ENCODE measurements at regions of chr12 and their contacts with region 1.

Region 1: DNA sequence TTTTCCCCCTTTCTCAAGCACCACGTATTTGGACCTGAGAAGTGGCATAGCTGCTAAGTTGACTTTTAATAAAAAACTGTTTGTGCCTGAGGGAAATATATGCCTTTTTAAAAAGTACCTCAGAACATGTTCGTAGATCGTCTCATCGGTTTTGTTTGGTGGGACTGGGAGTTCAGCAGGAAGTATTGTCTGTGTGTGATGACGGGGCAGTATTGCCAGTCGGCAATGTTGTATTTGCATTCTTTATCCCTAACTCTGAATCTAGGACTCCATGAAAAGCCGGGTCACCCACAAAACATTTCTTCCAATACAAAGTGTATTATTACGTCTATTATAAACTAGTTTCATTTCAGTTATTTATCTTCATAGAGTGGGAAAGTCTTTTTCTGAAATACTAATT is 19.7 kb upstream of the FGD4 start:
- DNase-seq: no peak
- H3K4me3 ChIP-seq: no peak overlapping the region
- H3K27ac ChIP-seq: no peak overlapping the region
- H3K4me1 ChIP-seq: no peaks in the 10 kb centered on the region
- H3K27me3 ChIP-seq: no peaks in the 10 kb centered on the region
- CTCF ChIP-seq: no peak

Region 2: DNA sequence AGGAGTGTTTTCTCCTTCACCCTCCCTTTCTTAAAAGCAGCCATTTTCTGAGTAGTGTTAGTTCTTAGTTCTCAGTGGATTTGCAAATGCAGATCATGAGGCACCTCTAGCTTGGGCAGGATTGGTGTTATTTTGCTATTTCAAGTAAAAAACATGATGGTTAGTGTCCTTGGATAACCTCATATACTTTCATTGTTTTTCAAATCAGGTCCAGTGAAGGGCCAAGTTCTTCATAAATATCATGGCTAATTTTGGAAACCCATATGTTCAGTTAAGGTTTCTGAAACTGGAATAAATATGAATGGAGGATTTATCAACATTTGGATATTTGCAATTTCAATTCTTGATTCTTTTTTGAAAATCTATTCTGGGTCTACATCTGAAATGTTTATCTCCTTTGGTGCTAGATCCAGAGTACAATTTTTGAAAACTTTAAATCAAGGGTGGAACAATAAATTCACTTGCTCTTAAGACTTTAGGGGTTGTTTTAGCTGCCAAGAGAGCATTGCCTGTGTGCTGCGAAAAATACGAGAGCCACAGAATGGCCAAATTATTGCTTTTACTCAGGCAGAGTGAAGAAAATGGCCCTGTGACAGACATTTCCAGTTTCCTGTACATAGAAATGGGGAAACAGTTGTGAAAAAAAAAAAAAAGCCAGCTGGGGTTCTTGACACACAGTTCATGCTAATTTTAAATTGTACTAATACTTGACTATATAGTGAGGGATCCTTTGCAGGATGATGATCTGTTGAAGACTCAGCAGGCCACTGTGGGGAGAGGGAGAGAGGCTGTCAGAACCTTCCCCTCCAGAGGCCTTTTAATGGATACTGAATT is 168.4 kb before region 1 on chr12:
- intact Hi-C with region 1: no loop called
- DNase-seq: no peak
- H3K4me3 ChIP-seq: no peak overlapping the region
- H3K27ac ChIP-seq: no peak overlapping the region
- H3K4me1 ChIP-seq: peaks cover 12% of the 10 kb centered on the region
- H3K27me3 ChIP-seq: no peaks in the 10 kb centered on the region
- CTCF ChIP-seq: no peak

Region 3: DNA sequence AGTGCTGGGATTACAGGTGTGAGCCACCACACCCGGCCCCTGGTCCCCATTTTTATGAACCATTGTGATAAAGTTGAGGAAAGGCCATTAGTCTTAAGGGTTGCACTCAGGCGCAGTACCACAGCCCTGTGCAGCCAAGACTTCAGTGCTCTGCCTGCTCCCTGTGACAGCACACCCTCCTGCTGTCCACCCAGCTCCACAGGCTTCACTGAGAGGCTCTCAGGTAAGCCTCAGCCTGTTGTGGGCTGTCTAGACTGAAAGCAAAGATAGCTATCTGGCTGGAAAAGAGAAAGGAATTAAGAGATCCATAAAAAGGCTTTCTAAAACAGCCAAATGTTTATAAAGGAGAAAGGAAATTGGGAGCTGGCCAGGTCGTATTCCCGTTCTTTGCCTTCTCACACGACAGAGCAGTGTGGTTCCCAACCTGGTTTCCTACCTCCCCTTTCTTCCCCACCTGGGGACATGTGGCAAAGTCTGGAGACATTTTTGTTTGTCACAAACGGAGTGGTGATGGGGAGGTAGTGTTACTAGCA is 280.3 kb after region 1 on chr12:
- intact Hi-C with region 1: loop called (anchors 5 kb)
- DNase-seq: no peak
- H3K4me3 ChIP-seq: no peak overlapping the region
- H3K27ac ChIP-seq: peak overlapping the region; percentile 65
- H3K4me1 ChIP-seq: peaks cover 21% of the 10 kb centered on the region
- H3K27me3 ChIP-seq: no peaks in the 10 kb centered on the region
- CTCF ChIP-seq: no peak

Measured in left ventricle myocardium inferior (tissue), 1 donor.